Caco-2 (cell line): ENCODE measurements at regions of chr9 and their contacts with region 1.

Region 1: GRCh38 chr9:34126207-34127034 is at the start of gene DCAF12:
- DNase-seq: peak; percentile 89 to 92
- H3K4me3 ChIP-seq: peak within 1 kb of the TSS; percentile 62
- H3K4me3 Mint-ChIP-seq: peak within 1 kb of the TSS; percentile 86
- H3K27ac Mint-ChIP-seq: peak within 1 kb of the TSS; percentile 90
- H3K4me1 ChIP-seq: peaks cover 21% of the 10 kb centered on the region
- H3K4me1 Mint-ChIP-seq: peaks cover 27% of the 10 kb centered on the region
- H3K27me3 ChIP-seq: no peaks in the 10 kb centered on the region
- H3K27me3 Mint-ChIP-seq: no peaks in the 10 kb centered on the region
- CTCF ChIP-seq: no peak
- total RNA-seq, gene DCAF12: 33.0 and 34.1 TPM in 2 replicates

Region 2: DNA sequence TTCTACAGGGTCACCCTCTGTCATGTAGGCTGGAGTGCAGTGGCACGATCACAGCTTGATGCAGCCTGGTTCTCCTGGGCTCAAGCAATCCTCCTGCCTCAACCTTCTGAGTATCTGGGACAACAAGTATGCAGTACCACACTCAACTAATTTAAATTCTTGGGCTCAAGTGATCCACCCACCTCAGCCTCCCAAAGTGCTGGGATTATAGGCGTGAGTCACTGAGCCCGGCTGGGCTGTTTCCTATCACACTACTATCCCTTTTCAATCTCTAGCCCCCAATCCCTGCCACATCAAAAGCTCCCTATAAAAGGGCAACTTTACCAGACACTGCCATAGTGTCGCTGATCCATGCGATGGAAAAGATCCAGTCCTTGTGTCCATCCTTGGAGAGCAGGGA is 20.3 kb before region 1 on chr9:
- CTCF ChIA-PET with region 1: no interaction called
- POLR2A ChIA-PET with region 1: no interaction called
- intact Hi-C with region 1: loop called (anchors 2 kb)
- DNase-seq: no peak
- H3K4me3 ChIP-seq: no peak overlapping the region
- H3K4me3 Mint-ChIP-seq: no peak overlapping the region
- H3K27ac Mint-ChIP-seq: no peak overlapping the region
- H3K4me1 ChIP-seq: no peaks in the 10 kb centered on the region
- H3K4me1 Mint-ChIP-seq: no peaks in the 10 kb centered on the region
- H3K27me3 ChIP-seq: no peaks in the 10 kb centered on the region
- H3K27me3 Mint-ChIP-seq: no peaks in the 10 kb centered on the region
- CTCF ChIP-seq: no peak

Region 3: DNA sequence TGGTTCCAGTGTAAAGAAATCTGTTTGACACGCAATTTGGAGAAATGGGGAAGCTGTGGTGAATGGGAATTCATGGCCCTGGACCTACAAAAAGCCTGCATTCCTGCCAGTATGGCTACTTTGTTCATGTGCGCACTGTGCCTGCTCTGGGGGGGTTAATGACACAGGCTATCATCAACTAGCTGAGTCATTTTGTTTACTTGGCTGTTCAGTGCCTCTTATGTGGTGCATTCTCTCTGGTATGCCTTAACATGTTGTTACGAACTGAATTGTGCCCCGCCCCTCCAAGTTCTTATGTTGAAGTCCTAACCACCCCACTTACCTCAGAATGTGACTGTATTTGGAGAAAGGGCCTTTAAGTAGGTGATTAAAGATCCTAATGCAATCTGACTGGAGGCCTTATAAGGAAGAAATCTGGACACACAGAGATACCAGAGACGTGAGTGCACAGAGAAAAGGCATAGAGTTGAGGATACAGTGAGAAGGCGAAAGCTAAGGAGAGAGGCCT is 32.0 kb after region 1 on chr9:
- CTCF ChIA-PET with region 1: interaction called, 5 read pairs
- POLR2A ChIA-PET with region 1: interaction called, 3 read pairs
- intact Hi-C with region 1: loop called (anchors 1 kb)
- DNase-seq: peak; percentile 53 to 70
- H3K4me3 ChIP-seq: no peak overlapping the region
- H3K4me3 Mint-ChIP-seq: no peak overlapping the region
- H3K27ac Mint-ChIP-seq: peak overlapping the region; percentile 79
- H3K4me1 ChIP-seq: peaks cover 10% of the 10 kb centered on the region
- H3K4me1 Mint-ChIP-seq: peaks cover 12% of the 10 kb centered on the region
- H3K27me3 ChIP-seq: no peaks in the 10 kb centered on the region
- H3K27me3 Mint-ChIP-seq: no peaks in the 10 kb centered on the region
- CTCF ChIP-seq: no peak

Region 4: DNA sequence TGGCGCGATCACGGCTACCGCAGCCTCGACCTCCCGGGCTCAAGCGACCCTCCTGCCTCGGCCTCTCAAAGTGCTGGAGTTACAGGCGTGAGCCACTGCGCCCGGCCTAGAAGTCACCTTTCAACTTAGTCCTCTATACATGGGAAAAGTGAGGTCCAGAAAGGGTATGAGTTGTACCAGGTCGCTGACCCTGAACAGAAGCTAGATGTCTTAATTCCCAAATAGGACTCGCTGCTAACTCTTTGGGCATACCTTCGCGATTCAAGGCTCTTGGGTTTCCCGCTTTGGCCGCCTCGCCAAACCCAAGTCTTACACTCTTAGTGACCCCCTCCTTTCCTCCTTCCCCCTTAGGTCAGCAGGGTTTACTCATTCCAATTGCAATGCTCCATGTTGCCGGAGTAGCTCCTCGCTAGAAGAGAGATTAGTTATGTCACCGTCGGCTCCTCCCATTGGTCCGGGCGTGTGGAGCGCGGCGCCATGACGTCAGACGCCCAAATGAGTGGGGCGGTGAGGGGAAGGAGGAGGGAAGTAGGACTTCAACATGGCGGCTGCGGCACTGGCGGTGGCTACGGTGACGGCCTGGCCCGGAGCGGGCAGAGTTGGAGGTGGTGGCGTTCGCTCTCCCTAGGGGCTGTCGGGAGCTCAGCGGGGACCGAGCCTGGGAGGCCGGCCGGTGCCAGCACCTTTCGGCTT is 52.2 kb after region 1 on chr9 and contains the start of gene UBAP1:
- CTCF ChIA-PET with region 1: no interaction called
- POLR2A ChIA-PET with region 1: interaction called, 7 read pairs
- intact Hi-C with region 1: loop called (anchors 1 kb)
- DNase-seq: peak; percentile 96 to 97
- H3K4me3 ChIP-seq: peak within 1 kb of the TSS; percentile 69
- H3K4me3 Mint-ChIP-seq: peak within 1 kb of the TSS; percentile 100
- H3K27ac Mint-ChIP-seq: peak within 1 kb of the TSS; percentile 98
- H3K4me1 ChIP-seq: no peaks in the 10 kb centered on the region; the same call in 1 of the 2 replicates
- H3K4me1 Mint-ChIP-seq: no peaks in the 10 kb centered on the region
- H3K27me3 ChIP-seq: no peaks in the 10 kb centered on the region
- H3K27me3 Mint-ChIP-seq: no peaks in the 10 kb centered on the region
- CTCF ChIP-seq: no peak
- total RNA-seq, gene UBAP1: 32.5 and 33.2 TPM in 2 replicates

Region 5: DNA sequence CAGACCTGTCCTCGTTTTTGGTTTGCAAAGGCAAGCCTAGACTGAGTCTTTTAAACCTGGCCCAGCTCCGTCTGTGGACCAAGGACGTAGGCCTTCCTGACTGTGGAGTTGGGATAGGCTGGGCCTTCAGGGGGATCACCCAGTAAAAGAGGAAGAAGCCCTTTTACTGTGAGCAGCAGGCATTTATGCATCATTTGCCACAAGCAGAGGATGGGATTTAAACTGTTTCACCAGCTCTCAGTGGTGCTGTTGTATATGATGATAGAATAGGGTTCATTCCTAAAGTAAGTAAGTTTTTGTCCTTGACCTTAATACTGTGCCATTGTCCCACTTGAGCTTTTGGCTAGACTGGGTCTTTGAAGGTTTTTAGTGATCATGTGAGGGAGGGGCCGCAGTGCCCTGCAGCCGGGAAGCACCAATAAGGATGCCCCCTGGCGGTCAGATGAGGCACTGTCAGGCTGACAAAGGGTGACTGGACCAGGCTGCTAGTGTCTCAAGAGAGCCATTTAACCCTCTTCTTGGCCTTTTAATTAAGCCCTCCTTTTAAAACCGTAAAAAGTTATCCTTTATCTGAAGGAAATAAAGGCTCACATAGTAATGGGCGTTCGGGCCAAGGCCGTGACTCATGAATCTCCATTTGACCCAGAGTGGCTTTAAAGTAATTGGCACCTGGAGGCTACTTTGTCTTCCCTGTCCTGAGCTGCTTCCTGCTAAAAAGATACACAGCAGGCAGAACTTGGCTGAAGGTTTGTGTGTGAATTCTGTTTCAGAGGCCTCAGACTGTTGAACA is 126.4 kb after region 1 on chr9:
- CTCF ChIA-PET with region 1: no interaction called
- POLR2A ChIA-PET with region 1: no interaction called
- intact Hi-C with region 1: loop called (anchors 1 kb)
- DNase-seq: peak; percentile 70 to 80
- H3K4me3 ChIP-seq: no peak overlapping the region
- H3K4me3 Mint-ChIP-seq: no peak overlapping the region
- H3K27ac Mint-ChIP-seq: no peak overlapping the region
- H3K4me1 ChIP-seq: no peaks in the 10 kb centered on the region
- H3K4me1 Mint-ChIP-seq: no peaks in the 10 kb centered on the region
- H3K27me3 ChIP-seq: no peaks in the 10 kb centered on the region
- H3K27me3 Mint-ChIP-seq: no peaks in the 10 kb centered on the region
- CTCF ChIP-seq: peak; percentile 92 to 93